ENCODE measurements at regions of chr20 and their contacts with region 1.

Region 1: GRCh38 chr20:44187051-44187762 is at the start of gene JPH2:
- DNase-seq: peak in 2 of 6 donors; percentile 21 to 37
- ATAC-seq: peak; percentile 50 to 70 (median 55)
- H3K4me3 ChIP-seq: peak within 1 kb of the TSS; percentile 4 to 45 (median 20)
- H3K27ac ChIP-seq: no peak within 1 kb of the TSS
- H3K4me1 ChIP-seq: peaks cover 0 to 10% (median 3%) of the 10 kb centered on the region in 3 donors
- H3K27me3 ChIP-seq: no peaks in the 10 kb centered on the region
- CTCF ChIP-seq: no peak
- total RNA-seq, gene JPH2: 0.09 to 0.37 (median 0.22) TPM

Region 2: DNA sequence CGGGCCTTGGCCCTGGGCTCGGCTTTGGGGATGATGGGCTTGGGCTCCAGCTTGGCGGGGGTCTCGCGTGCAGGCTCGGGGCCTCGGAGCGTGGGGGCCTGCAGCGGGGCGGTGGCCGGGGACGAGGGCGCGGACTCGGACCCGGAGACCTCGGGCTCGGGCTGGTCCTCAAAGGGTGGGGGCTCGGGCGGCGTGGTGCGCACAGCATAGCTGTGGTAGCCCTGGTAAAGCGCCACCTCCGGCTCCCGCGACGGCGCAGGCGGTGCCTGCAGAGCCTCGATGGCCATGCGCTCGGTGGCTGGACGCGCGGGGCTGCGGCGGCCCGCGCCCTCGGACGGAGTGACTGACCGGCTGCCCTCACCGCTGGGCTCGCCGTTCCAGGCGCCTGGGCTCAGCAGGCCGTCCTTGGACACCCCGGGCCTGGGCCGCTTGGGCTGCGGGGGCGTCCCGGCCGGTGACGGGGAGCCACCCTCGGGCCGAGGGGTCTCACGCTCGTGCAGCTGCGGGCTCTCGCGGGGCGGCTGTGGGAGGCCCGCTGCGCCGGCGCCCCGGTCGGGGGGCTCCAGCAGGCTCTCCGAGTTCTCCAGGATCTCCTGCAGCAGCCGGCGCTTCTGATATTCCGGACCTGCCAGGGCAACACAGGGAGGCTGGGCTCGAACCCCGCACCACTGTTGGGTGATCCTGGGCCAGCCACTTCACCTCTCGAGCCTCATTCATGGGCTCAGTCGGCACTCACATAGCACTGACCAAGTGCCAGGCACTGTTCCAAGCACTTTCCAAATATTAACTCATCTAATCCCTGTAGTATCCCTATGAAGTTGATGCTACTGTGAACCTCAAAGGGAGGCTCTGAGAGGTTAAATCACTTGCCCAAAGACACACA is 71.2 kb before region 1 on chr20:
- intact Hi-C with region 1: loop called (anchors 2 to 10 kb)
- DNase-seq: no peak
- ATAC-seq: peak; percentile 9 to 36 (median 22)
- H3K4me3 ChIP-seq: no peak overlapping the region
- H3K27ac ChIP-seq: no peak overlapping the region
- H3K4me1 ChIP-seq: no peaks in the 10 kb centered on the region
- H3K27me3 ChIP-seq: peaks cover 0 to 9% (median 0%) of the 10 kb centered on the region in 4 donors
- CTCF ChIP-seq: no peak

Region 3: DNA sequence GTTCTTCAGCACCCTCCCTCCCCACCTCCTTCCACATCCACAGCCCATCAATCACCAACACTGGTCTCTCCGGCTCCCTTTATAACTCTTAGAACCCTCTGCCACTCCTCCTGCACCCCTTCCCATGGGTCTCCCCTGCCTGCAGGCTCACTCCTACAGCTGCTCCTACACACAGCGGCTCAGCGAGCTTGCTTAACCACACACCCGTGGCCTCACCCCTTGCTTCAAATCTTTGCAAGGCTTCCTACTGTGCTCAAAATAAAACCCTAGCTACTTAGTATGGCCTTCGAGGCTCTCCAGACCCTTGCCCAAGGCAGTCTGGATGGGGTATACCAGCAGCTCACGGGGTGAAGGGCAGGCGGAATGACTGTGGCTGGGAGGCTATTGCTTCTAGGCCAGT is 64.0 kb before region 1 on chr20:
- intact Hi-C with region 1: loop called in 2 of 3 experiments (anchors 5 to 10 kb)
- DNase-seq: no peak
- ATAC-seq: no peak
- H3K4me3 ChIP-seq: no peak overlapping the region
- H3K27ac ChIP-seq: no peak overlapping the region
- H3K4me1 ChIP-seq: no peaks in the 10 kb centered on the region
- H3K27me3 ChIP-seq: no peaks in the 10 kb centered on the region
- CTCF ChIP-seq: no peak

Region 4: GRCh38 chr20:44129911-44130718 is 57.1 kb before region 1 on chr20:
- intact Hi-C with region 1: loop called in 1 of 3 experiments (anchors 10 kb)
- DNase-seq: no peak
- ATAC-seq: no peak
- H3K4me3 ChIP-seq: no peak overlapping the region
- H3K27ac ChIP-seq: no peak overlapping the region
- H3K4me1 ChIP-seq: no peaks in the 10 kb centered on the region
- H3K27me3 ChIP-seq: no peaks in the 10 kb centered on the region
- CTCF ChIP-seq: no peak

Measured in pancreas (tissue), 10 donors.